K562 (cell line): ENCODE measurements at regions of chr2 and their contacts with region 1.

Region 1: GRCh38 chr2:176140513-176141317 is 10.6 kb upstream of the HOXD4 start:
- DNase-seq: peak; percentile 86 to 95 (median 94)
- ATAC-seq: peak; percentile 98
- H3K4me3 ChIP-seq: peak overlapping the region; percentile 51
- H3K27ac ChIP-seq: no peak overlapping the region
- H3K4me1 ChIP-seq: peaks cover 0 to 15% of the 10 kb centered on the region in 2 experiments; a peak in 2 of 5 replicates
- H3K27me3 ChIP-seq: peaks cover 22 to 40% of the 10 kb centered on the region in 2 experiments; a peak in 4 of 5 replicates
- CTCF ChIP-seq: peak; percentile 84 to 95 (median 91)
- EP300 ChIP-seq: no peak; the same call in 1 of the 2 replicates
- POLR2A ChIP-seq: no peak
- RAD21 ChIP-seq: peak; percentile 98 to 99

Region 2: DNA sequence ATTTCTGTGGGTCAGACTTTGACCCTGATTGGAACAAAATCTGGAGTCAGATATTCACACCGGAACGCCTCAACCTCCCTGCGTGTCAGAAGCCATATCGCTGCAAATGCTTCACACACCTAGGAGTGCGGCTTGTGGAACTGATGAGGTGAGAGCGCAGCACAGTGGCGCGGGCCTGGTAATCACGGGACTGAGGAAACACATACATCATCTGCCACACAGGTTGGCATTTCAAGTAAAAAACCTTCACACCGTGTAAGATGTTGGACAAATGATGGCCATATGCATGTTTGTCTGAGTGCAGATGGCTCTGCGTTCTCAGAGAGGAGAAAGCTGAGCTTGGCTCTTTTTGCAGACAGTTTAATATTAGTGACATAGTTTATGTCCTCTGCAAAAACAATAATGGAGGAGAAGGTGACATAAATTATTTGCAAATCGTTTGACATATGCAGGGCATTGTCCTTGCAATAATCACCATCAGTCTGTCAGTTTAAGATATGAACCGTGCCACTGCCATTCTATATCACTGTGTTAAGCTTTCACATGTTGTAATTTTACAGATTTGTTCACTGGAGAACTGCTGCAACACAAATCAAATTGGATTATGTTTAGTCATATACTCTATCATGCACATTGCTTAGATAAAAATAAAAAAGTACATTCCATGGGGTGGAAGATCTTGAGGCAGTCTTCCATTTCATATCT is 229.9 kb after region 1 on chr2:
- CTCF ChIA-PET with region 1: no interaction called
- POLR2A ChIA-PET with region 1: no interaction called
- in situ Hi-C with region 1: no loop called
- intact Hi-C with region 1: loop called (anchors 10 kb)
- DNase-seq: no peak
- ATAC-seq: no peak
- H3K4me3 ChIP-seq: no peak overlapping the region
- H3K27ac ChIP-seq: no peak overlapping the region
- H3K4me1 ChIP-seq: no peaks in the 10 kb centered on the region
- H3K27me3 ChIP-seq: peaks cover 3 to 4% of the 10 kb centered on the region in 2 experiments; a peak in 2 of 5 replicates
- CTCF ChIP-seq: 0 out of 6 replicates have a peak, but pooled peaks of 1 of the 3 experiments have one; percentile 2
- EP300 ChIP-seq: no peak
- POLR2A ChIP-seq: no peak
- RAD21 ChIP-seq: no peak; a peak in 1 of 4 replicates

Region 3: DNA sequence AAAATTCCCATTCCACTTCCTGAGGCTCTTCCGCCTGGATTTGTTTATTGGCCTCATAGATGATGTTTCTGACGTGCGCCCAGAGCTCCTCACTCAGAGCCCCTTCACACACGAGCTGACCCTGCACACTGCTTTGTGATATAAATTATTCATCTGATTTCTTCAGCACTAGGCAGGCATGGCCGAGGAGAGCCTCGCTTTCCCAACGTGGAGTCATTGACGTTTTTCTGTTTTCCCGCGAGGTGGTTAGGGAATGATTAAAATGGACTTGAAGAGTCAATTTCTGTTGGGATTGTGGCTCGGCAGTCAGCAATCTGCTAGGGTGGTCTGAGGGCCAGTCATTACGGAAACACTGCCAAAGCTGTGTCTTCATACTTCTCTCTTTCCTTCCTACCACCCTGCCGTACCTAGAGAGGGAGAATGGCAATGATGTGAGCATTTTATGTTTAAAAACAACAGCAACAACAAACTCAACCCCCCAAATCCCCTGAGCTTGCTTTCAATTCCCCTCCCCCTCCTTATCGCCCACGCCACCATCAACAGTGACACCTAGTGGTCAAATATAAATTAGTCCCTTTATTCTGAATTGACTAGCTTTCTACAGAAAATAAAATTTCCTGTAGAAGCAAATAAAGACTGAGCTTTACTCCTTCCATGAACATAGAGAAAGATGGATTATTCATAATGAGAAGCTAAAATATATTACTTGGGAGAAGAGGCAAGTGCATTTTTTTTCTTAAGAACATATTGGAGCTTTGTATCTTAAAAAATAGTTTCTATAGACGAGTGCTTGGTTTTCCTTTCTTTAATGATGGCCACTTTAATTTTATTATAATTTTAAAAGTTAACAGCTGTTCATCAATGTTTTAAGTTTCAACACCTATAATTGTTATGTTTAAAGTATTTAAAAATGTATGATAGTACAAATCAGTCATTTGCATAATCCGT is 413.7 kb after region 1 on chr2:
- CTCF ChIA-PET with region 1: interaction called, 24 read pairs
- POLR2A ChIA-PET with region 1: no interaction called
- in situ Hi-C with region 1: no loop called
- intact Hi-C with region 1: loop called (anchors 1 kb)
- DNase-seq: peak; percentile 69 to 81 (median 78)
- ATAC-seq: peak; percentile 84
- H3K4me3 ChIP-seq: no peak overlapping the region
- H3K27ac ChIP-seq: no peak overlapping the region
- H3K4me1 ChIP-seq: peaks cover 0 to 3% of the 10 kb centered on the region in 2 experiments; a peak in 1 of 5 replicates
- H3K27me3 ChIP-seq: peaks cover 6 to 20% of the 10 kb centered on the region in 2 experiments
- CTCF ChIP-seq: peak; percentile 66 to 82 (median 78)
- EP300 ChIP-seq: no peak
- POLR2A ChIP-seq: no peak
- RAD21 ChIP-seq: peak; percentile 79 to 87

Region 4: DNA sequence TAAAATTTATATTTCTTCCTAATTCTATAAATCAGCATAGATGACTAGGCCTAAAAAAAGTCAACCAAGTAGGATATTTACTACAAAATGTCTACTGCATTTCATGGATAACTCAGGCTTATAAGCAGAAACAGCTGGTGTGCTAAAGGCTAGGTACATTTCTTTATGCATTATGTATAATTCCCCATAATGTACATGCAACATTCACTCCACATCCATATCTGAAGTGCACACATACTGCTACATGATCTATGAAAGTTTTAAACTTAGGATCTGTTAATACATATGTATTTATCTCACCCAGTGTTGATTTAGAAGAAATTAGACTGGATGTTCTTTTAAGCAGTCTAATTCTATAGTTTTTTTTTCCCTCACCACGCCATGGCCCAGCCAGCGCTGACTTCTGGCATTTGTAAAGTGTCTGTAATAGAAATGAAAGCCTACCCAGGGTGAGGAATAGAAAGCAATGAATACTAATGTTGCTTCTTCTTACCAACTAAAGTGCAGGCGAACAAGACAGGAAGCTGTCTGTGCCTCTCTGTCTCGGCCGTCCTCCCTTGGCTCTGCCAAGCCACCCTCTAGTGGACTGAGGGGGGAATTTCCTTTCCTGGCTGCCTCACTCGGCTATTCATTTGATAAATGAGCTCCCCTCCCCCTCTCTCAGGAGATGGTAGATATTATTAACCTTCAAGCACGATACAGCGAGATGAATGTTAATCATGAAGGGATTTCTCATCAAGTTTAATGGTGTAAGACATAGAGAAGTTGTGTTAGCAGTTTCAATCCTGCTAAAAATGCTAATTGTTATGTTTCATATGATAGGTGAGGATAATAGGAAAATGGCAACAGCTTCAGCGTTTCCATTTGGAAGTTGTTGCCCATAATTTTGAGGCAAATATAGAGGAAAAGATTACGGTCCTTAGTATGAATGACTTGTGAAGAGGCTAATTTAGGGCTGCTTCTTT is 513.0 kb after region 1 on chr2:
- CTCF ChIA-PET with region 1: interaction called, 21 read pairs
- POLR2A ChIA-PET with region 1: no interaction called
- in situ Hi-C with region 1: no loop called
- intact Hi-C with region 1: loop called (anchors 1 kb)
- DNase-seq: peak; percentile 29 to 58 (median 50)
- ATAC-seq: peak; percentile 95
- H3K4me3 ChIP-seq: no peak overlapping the region
- H3K27ac ChIP-seq: no peak overlapping the region
- H3K4me1 ChIP-seq: no peaks in the 10 kb centered on the region
- H3K27me3 ChIP-seq: no peaks in the 10 kb centered on the region; a peak in 2 of 5 replicates
- CTCF ChIP-seq: peak; percentile 64 to 77 (median 66)
- EP300 ChIP-seq: no peak
- POLR2A ChIP-seq: no peak
- RAD21 ChIP-seq: peak; percentile 26 to 42; a peak in 2 of 4 replicates

Region 5: GRCh38 chr2:177763532-177764265 is 1623.0 kb after region 1 on chr2:
- CTCF ChIA-PET with region 1: interaction called, 8 read pairs
- POLR2A ChIA-PET with region 1: no interaction called
- in situ Hi-C with region 1: loop called (anchors 25 kb)
- intact Hi-C with region 1: loop called (anchors 10 kb)
- DNase-seq: peak; percentile 74 to 90 (median 85)
- ATAC-seq: peak; percentile 98
- H3K4me3 ChIP-seq: no peak overlapping the region
- H3K27ac ChIP-seq: no peak overlapping the region
- H3K4me1 ChIP-seq: peaks cover 4 to 16% of the 10 kb centered on the region in 2 experiments; a peak in 4 of 5 replicates
- H3K27me3 ChIP-seq: no peaks in the 10 kb centered on the region
- CTCF ChIP-seq: peak; percentile 91 to 96 (median 92)
- EP300 ChIP-seq: no peak
- POLR2A ChIP-seq: no peak
- RAD21 ChIP-seq: peak; percentile 69 to 77